Endothelial cell of umbilical vein (primary cell): ENCODE measurements at regions of chrX and their contacts with region 1.

Region 1: GRCh38 chrX:119791438-119792231 is at the start of gene RPL39:
- DNase-seq: peak; percentile 87
- H3K4me3 ChIP-seq: peak within 1 kb of the TSS; percentile 65 to 93 (median 92)
- H3K27ac ChIP-seq: peak within 1 kb of the TSS; percentile 85
- H3K4me1 ChIP-seq: peaks cover 24% of the 10 kb centered on the region
- H3K27me3 ChIP-seq: no peaks in the 10 kb centered on the region
- CTCF ChIP-seq: no peak
- POLR2A ChIP-seq: peak; percentile 89
- total RNA-seq, gene RPL39: 1,516 and 1,582 TPM in 2 replicates

Region 2: GRCh38 chrX:119574394-119575266 is 217.0 kb before region 1 on chrX and contains the start of gene UBE2A:
- CTCF ChIA-PET with region 1: no interaction called
- POLR2A ChIA-PET with region 1: no interaction called
- dilution Hi-C with region 1: no loop called
- intact Hi-C with region 1: loop called (anchors 1 kb)
- DNase-seq: peak; percentile 90
- H3K4me3 ChIP-seq: peak within 1 kb of the TSS; percentile 75 to 85 (median 85)
- H3K27ac ChIP-seq: peak within 1 kb of the TSS; percentile 71
- H3K4me1 ChIP-seq: peaks cover 10% of the 10 kb centered on the region
- H3K27me3 ChIP-seq: no peaks in the 10 kb centered on the region
- CTCF ChIP-seq: no peak
- POLR2A ChIP-seq: peak; percentile 82
- total RNA-seq, gene UBE2A: 66.1 and 66.9 TPM in 2 replicates

Region 3: DNA sequence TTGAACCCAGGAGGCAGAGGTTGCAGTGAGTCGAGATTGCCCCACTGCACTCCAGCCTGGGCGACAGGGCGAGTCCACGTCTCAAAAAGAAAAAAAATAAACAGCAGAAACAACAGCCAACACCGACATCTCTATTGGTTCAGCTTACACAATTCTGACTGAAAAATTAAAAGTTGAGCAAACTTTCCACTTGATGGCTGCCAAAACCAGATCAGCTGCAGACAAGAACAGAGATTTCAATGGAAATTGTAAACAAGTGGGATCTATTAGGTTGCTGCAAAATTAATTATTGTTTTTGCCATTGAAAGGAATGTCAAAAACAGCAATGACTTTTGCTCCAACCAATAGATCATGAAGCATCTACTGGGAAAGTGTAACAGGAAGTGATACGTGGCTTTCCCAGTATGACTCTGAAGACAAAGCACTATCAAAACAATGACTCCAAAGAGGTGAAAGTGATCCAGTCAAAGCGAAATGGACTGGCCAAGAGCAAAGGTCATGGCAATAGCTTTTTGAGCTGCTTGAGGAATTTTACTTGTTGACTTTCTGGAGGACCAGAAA is 34.8 kb after region 1 on chrX:
- CTCF ChIA-PET with region 1: interaction called, 3 read pairs
- POLR2A ChIA-PET with region 1: interaction called, 4 read pairs
- dilution Hi-C with region 1: no loop called
- intact Hi-C with region 1: loop called (anchors 5 kb)
- DNase-seq: peak; percentile 64
- H3K4me3 ChIP-seq: no peak overlapping the region
- H3K27ac ChIP-seq: no peak overlapping the region
- H3K4me1 ChIP-seq: peaks cover 4% of the 10 kb centered on the region
- H3K27me3 ChIP-seq: no peaks in the 10 kb centered on the region
- CTCF ChIP-seq: no peak
- POLR2A ChIP-seq: no peak

Region 4: GRCh38 chrX:119852382-119853353 is 61.0 kb after region 1 on chrX and contains the start of gene UPF3B:
- CTCF ChIA-PET with region 1: interaction called, 13 read pairs
- POLR2A ChIA-PET with region 1: interaction called, 22 read pairs
- dilution Hi-C with region 1: no loop called
- intact Hi-C with region 1: loop called (anchors 5 kb)
- DNase-seq: peak; percentile 97
- H3K4me3 ChIP-seq: peak within 1 kb of the TSS; percentile 86 to 89 (median 89)
- H3K27ac ChIP-seq: peak within 1 kb of the TSS; percentile 76
- H3K4me1 ChIP-seq: peaks cover 6% of the 10 kb centered on the region
- H3K27me3 ChIP-seq: no peaks in the 10 kb centered on the region
- CTCF ChIP-seq: no peak
- POLR2A ChIP-seq: peak; percentile 70
- total RNA-seq, gene UPF3B: 10.2 and 11.9 TPM in 2 replicates

Region 5: GRCh38 chrX:119871599-119872395 is 80.2 kb after region 1 on chrX and contains the starts of genes NDUFA1 and RNF113A:
- CTCF ChIA-PET with region 1: no interaction called
- POLR2A ChIA-PET with region 1: interaction called, 5 read pairs
- dilution Hi-C with region 1: no loop called
- intact Hi-C with region 1: loop called (anchors 2 kb)
- DNase-seq: peak; percentile 69
- H3K4me3 ChIP-seq: peak within 1 kb of the TSS; percentile 74 to 93 (median 84)
- H3K27ac ChIP-seq: peak within 1 kb of the TSS; percentile 87
- H3K4me1 ChIP-seq: peaks cover 11% of the 10 kb centered on the region
- H3K27me3 ChIP-seq: no peaks in the 10 kb centered on the region
- CTCF ChIP-seq: no peak
- POLR2A ChIP-seq: peak; percentile 80
- total RNA-seq, gene NDUFA1: 89.9 and 96.3 TPM in 2 replicates
- total RNA-seq, gene RNF113A: 10.2 and 11.7 TPM in 2 replicates

Region 6: GRCh38 chrX:119880552-119881437 is 89.2 kb after region 1 on chrX:
- CTCF ChIA-PET with region 1: interaction called, 4 read pairs
- POLR2A ChIA-PET with region 1: no interaction called
- dilution Hi-C with region 1: no loop called
- intact Hi-C with region 1: loop called (anchors 2 kb)
- DNase-seq: peak; percentile 44
- H3K4me3 ChIP-seq: no peak overlapping the region
- H3K27ac ChIP-seq: no peak overlapping the region
- H3K4me1 ChIP-seq: no peaks in the 10 kb centered on the region
- H3K27me3 ChIP-seq: no peaks in the 10 kb centered on the region
- CTCF ChIP-seq: peak; percentile 39 to 59
- POLR2A ChIP-seq: no peak